GM12878 (cell line): ENCODE measurements at regions of chr12 and their contacts with region 1.

Region 1: DNA sequence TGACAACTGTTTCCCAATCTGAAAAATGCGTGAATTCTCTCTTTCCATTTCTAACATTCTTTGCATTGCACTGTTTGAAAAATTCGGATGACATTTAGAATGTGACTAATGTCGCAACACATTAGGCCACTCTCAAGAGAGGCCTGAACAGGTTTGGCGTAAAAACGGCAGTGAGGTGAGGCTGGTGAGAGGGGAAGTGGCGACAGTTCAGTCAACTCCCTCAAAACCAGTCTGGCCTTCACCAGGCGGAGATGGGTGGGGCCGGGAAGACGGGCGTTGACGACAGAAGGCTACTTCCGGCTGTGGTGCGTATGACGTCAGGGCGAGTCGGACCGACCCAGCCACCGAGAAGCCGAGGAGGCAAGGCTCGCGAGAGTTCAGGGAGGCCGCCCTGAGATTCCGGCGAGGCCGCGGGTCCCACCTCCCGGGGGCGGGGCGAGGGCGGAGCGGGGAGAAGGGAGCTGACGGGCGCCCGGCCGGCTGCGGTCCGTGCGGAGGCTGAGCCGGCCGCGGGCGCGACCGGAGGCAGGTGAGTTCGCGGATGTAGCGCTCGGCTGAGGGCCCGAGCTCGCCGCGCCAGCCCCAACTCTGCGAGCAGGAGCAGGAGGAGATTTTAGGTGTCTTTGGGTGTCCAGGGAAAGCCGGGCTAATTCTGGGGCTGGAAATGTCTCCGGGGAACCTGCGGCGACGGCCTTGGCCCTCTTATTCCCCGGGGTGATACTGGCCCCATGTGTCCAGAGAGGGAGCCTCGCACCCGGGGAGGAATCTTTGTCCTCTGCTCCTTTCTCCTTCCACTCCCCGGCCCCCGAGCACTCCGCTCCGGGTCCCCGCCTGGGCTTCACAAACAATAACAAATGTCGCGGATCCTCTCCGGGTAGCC is at the start of gene STK38L:
- DNase-seq: peak; percentile 86
- ATAC-seq: peak; percentile 90
- H3K4me3 ChIP-seq: peak within 1 kb of the TSS; percentile 86
- H3K27ac ChIP-seq: peak within 1 kb of the TSS; percentile 93
- H3K4me1 ChIP-seq: peaks cover 13% of the 10 kb centered on the region; the same call in 1 of the 2 replicates
- H3K27me3 ChIP-seq: no peaks in the 10 kb centered on the region
- CTCF ChIP-seq: peak; percentile 18 to 38 (median 21); a peak in 4 of 6 replicates
- EP300 ChIP-seq: peak in 1 of 2 experiments; percentile 29; a peak in 1 of 4 replicates
- POLR2A ChIP-seq: peak; percentile 98
- RAD21 ChIP-seq: peak; percentile 46
- polyA plus RNA-seq, gene STK38L: 43.0 to 50.2 TPM

Region 2: GRCh38 chr12:27123642-27124041 is 120.4 kb before region 1 on chr12:
- CTCF ChIA-PET with region 1: no interaction called
- POLR2A ChIA-PET with region 1: no interaction called
- RAD21 ChIA-PET with region 1: no interaction called
- SMC1A ChIA-PET with region 1: no interaction called
- in situ Hi-C with region 1: no loop called
- intact Hi-C with region 1: no loop called
- DNase-seq: no peak
- ATAC-seq: peak; percentile 57
- H3K4me3 ChIP-seq: no peak overlapping the region
- H3K27ac ChIP-seq: no peak overlapping the region
- H3K4me1 ChIP-seq: no peaks in the 10 kb centered on the region
- H3K27me3 ChIP-seq: no peaks in the 10 kb centered on the region
- CTCF ChIP-seq: peak; percentile 11 to 32 (median 24); a peak in 1 of 6 replicates
- EP300 ChIP-seq: no peak
- POLR2A ChIP-seq: no peak
- RAD21 ChIP-seq: peak; percentile 60

Region 3: DNA sequence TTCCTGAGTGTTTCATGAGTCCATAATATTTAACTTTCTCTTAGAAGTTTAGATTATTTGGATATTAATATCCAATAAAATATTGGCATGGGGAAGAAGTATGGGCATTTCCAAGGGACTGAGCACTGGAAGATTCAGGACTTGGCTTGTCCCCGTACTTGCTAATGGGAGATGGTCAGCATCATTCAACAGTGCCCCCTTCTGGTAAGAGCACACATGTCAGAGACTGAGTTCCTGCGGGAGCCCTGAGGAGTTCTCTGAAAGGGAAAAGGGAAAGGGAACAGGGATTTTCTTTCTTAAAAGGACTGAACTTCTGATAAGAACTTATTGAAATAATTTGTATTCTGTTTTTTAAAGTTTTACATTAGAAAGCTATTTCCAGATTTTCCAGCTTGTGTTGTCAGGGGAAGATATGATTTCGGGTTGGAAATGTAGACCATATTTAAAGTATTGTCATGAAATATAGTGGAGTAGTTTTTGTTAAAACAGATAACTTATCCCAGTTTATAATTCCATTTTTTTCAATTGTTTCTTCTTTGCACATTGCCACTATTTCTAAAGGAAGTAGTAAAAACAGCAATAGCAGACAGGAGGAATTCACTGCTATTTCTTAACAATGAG is 101.8 kb before region 1 on chr12:
- CTCF ChIA-PET with region 1: interaction called, 6 read pairs
- POLR2A ChIA-PET with region 1: no interaction called
- RAD21 ChIA-PET with region 1: interaction called, 3 read pairs
- SMC1A ChIA-PET with region 1: interaction called, 4 read pairs
- in situ Hi-C with region 1: no loop called
- intact Hi-C with region 1: loop called (anchors 2 kb)
- DNase-seq: no peak
- ATAC-seq: peak; percentile 80
- H3K4me3 ChIP-seq: no peak overlapping the region
- H3K27ac ChIP-seq: no peak overlapping the region
- H3K4me1 ChIP-seq: peaks cover 9% of the 10 kb centered on the region; the same call in 1 of the 2 replicates
- H3K27me3 ChIP-seq: no peaks in the 10 kb centered on the region
- CTCF ChIP-seq: peak; percentile 72 to 79 (median 76)
- EP300 ChIP-seq: no peak
- POLR2A ChIP-seq: no peak
- RAD21 ChIP-seq: peak; percentile 87

Region 4: DNA sequence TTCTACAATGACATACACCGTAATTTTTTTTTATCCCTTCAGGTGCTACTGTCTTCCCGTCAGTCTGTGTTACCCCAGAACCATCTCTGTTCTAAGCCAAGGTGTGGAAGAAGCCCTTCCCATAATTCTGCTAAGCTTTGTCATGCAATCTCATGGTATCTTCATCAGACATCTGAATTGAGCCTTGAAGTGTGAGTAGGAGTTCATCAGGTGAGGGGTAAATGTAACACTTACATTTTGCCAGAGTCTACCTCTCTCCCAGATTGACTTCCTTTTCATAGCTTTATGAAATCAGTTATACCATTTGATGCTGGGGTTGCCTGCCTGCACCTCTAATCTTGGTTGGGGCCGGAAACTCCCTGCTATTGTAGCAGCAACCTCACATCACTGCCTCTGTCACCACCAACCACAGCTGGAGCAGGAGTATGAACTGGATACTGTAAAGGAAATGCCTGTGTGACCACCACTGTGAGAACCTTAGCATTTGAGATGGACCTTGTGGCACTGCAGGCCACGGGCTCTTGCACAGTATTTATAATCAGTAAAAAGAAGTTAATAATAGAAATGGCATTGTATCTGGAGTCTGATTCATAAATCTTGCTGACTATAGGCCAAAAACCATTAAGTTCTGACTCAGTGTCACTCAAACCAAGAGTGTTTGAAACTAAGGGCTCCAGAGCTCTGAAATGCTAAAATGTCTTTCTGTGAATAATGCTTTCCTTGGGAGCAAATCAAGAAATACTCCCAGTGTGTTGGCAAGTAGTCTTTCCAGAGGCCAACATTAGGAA is 58.6 kb before region 1 on chr12:
- CTCF ChIA-PET with region 1: interaction called, 6 read pairs
- POLR2A ChIA-PET with region 1: interaction called, 4 read pairs
- RAD21 ChIA-PET with region 1: interaction called, 24 read pairs
- SMC1A ChIA-PET with region 1: interaction called, 51 read pairs
- in situ Hi-C with region 1: no loop called
- intact Hi-C with region 1: loop called (anchors 2 kb)
- DNase-seq: peak; percentile 85
- ATAC-seq: peak; percentile 98
- H3K4me3 ChIP-seq: no peak overlapping the region
- H3K27ac ChIP-seq: peak overlapping the region; percentile 82
- H3K4me1 ChIP-seq: peaks cover 20% of the 10 kb centered on the region
- H3K27me3 ChIP-seq: no peaks in the 10 kb centered on the region
- CTCF ChIP-seq: no peak
- EP300 ChIP-seq: peak; percentile 24 to 61; a peak in 2 of 4 replicates
- POLR2A ChIP-seq: no peak
- RAD21 ChIP-seq: peak; percentile 23; the same call in 1 of the 2 replicates

Region 5: DNA sequence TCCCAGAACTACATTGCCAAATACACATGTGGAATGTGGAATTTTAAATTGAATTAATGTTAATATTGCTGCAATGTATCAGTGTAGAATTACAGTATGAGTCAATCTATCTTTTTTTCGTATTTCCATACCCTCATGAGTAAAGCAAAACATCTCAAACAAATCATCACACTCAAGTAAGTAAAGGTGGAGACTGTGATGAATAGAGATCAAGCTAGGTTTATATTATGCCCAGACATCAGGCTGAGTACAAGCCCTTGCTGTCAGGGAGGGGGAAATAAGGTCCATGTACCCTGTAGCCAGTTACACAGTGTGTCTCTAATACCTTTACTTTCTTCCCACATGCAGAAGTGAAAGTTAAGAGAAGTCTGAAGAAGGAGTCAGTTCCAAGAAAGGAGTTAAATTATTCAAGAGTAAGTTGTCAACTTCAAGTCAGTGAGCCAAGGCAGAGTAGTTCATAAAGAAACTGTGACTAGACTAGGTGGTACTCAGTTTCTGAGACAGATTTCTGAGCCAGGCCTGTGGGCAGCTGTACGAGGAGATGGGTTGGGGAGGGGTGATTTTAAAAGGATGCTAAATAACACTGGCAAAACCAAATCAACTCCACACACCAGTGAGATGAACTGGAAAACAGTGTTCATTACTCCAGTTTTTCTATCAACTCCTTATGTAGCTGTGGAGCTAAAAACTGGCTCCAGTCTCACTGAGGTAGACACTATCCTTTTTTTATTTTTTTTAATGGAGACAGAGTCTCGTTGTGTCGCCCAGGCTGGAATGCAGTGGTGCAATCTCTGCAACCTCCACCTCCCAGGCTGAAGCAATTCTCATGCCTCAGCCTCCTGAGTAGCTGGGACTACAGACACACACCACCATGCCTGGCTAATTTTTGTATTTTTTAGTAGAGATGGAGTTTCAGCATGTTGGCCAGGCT is 23.7 kb before region 1 on chr12:
- CTCF ChIA-PET with region 1: interaction called, 18 read pairs
- POLR2A ChIA-PET with region 1: interaction called, 35 read pairs
- RAD21 ChIA-PET with region 1: interaction called, 71 read pairs
- SMC1A ChIA-PET with region 1: interaction called, 103 read pairs
- in situ Hi-C with region 1: no loop called
- intact Hi-C with region 1: loop called (anchors 2 kb)
- DNase-seq: peak; percentile 90
- ATAC-seq: peak; percentile 85
- H3K4me3 ChIP-seq: no peak overlapping the region
- H3K27ac ChIP-seq: peak overlapping the region; percentile 96
- H3K4me1 ChIP-seq: peaks cover 43% of the 10 kb centered on the region
- H3K27me3 ChIP-seq: no peaks in the 10 kb centered on the region
- CTCF ChIP-seq: no peak
- EP300 ChIP-seq: no peak; a peak in 1 of 4 replicates
- POLR2A ChIP-seq: 0 out of 2 replicates have a peak, but pooled peaks have one; percentile 19
- RAD21 ChIP-seq: peak; percentile 3; the same call in 1 of the 2 replicates

Region 6: GRCh38 chr12:27277846-27278260 is 33.8 kb after region 1 on chr12:
- CTCF ChIA-PET with region 1: interaction called, 8 read pairs
- POLR2A ChIA-PET with region 1: interaction called, 94 read pairs
- RAD21 ChIA-PET with region 1: interaction called, 29 read pairs
- SMC1A ChIA-PET with region 1: interaction called, 491 read pairs
- in situ Hi-C with region 1: no loop called
- intact Hi-C with region 1: loop called (anchors 2 kb)
- DNase-seq: peak; percentile 73
- ATAC-seq: peak; percentile 91
- H3K4me3 ChIP-seq: no peak overlapping the region
- H3K27ac ChIP-seq: peak overlapping the region; percentile 61; the same call in 1 of the 2 replicates
- H3K4me1 ChIP-seq: peaks cover 22% of the 10 kb centered on the region
- H3K27me3 ChIP-seq: no peaks in the 10 kb centered on the region
- CTCF ChIP-seq: no peak
- EP300 ChIP-seq: peak; percentile 64 to 71; a peak in 3 of 4 replicates
- POLR2A ChIP-seq: no peak
- RAD21 ChIP-seq: no peak

Region 7: GRCh38 chr12:27332407-27333301 is 88.6 kb after region 1 on chr12 and contains the start of gene BMAL2:
- CTCF ChIA-PET with region 1: interaction called, 4 read pairs
- POLR2A ChIA-PET with region 1: interaction called, 20 read pairs
- RAD21 ChIA-PET with region 1: interaction called, 5 read pairs
- SMC1A ChIA-PET with region 1: interaction called, 9 read pairs
- in situ Hi-C with region 1: no loop called
- intact Hi-C with region 1: no loop called
- DNase-seq: no peak
- ATAC-seq: peak; percentile 49
- H3K4me3 ChIP-seq: peak within 1 kb of the TSS; percentile 85
- H3K27ac ChIP-seq: peak within 1 kb of the TSS; percentile 89
- H3K4me1 ChIP-seq: peaks cover 42% of the 10 kb centered on the region
- H3K27me3 ChIP-seq: no peaks in the 10 kb centered on the region
- CTCF ChIP-seq: no peak
- EP300 ChIP-seq: no peak
- POLR2A ChIP-seq: peak; percentile 87
- RAD21 ChIP-seq: no peak
- polyA plus RNA-seq, gene BMAL2: 7.9 to 13.1 TPM